ENCODE measurements at regions of chrX and their contacts with region 1.

Region 1: GRCh38 chrX:39652336-39653131 is 445.2 kb downstream of the BCOR start:
- DNase-seq: no peak
- H3K4me3 ChIP-seq: no peak overlapping the region
- H3K27ac ChIP-seq: peak overlapping the region in 24 of 59 donors; percentile 15 to 90 (median 80)
- H3K27me3 ChIP-seq: peaks cover 0 to 81% (median 27%) of the 10 kb centered on the region in 45 donors
- CTCF ChIP-seq: peak in 53 of 56 donors; percentile 15 to 71 (median 50)

Region 2: GRCh38 chrX:39677978-39678791 is 25.7 kb after region 1 on chrX:
- intact Hi-C with region 1: loop called in 1 of 2 experiments (anchors 1 kb)
- DNase-seq: peak; percentile 11 to 89 (median 81)
- H3K4me3 ChIP-seq: no peak overlapping the region
- H3K27ac ChIP-seq: peak overlapping the region in 58 of 59 donors; percentile 3 to 94 (median 83)
- H3K27me3 ChIP-seq: peaks cover 0 to 41% (median 4%) of the 10 kb centered on the region in 45 donors
- CTCF ChIP-seq: peak in 2 of 56 donors; percentile 12 to 21

Region 3: GRCh38 chrX:39705299-39705698 is 52.8 kb after region 1 on chrX:
- intact Hi-C with region 1: no loop called
- DNase-seq: peak in 4 of 10 donors; percentile 21 to 58 (median 40)
- H3K4me3 ChIP-seq: no peak overlapping the region
- H3K27ac ChIP-seq: no peak overlapping the region
- H3K27me3 ChIP-seq: peaks cover 0 to 58% (median 6%) of the 10 kb centered on the region in 45 donors
- CTCF ChIP-seq: peak in 39 of 56 donors; percentile 13 to 58 (median 32)

Measured in dorsolateral prefrontal cortex (tissue), 120 donors.